Activated CD4-positive, alpha-beta T cell treated with anti-CD3 and anti-CD28 coated beads for 36 hours (primary cell): ENCODE measurements at regions of chr9 and their contacts with region 1.

Region 1: GRCh38 chr9:132944302-132945185 is at the start of gene TSC1:
- DNase-seq: peak; percentile 99
- ATAC-seq: peak; percentile 91
- H3K4me3 Mint-ChIP-seq: peak within 1 kb of the TSS; percentile 81
- H3K27ac Mint-ChIP-seq: peak within 1 kb of the TSS; percentile 99
- H3K4me1 Mint-ChIP-seq: peaks cover 31% of the 10 kb centered on the region
- H3K27me3 Mint-ChIP-seq: no peaks in the 10 kb centered on the region
- total RNA-seq, gene TSC1: 23.9 to 28.6 TPM

Region 2: DNA sequence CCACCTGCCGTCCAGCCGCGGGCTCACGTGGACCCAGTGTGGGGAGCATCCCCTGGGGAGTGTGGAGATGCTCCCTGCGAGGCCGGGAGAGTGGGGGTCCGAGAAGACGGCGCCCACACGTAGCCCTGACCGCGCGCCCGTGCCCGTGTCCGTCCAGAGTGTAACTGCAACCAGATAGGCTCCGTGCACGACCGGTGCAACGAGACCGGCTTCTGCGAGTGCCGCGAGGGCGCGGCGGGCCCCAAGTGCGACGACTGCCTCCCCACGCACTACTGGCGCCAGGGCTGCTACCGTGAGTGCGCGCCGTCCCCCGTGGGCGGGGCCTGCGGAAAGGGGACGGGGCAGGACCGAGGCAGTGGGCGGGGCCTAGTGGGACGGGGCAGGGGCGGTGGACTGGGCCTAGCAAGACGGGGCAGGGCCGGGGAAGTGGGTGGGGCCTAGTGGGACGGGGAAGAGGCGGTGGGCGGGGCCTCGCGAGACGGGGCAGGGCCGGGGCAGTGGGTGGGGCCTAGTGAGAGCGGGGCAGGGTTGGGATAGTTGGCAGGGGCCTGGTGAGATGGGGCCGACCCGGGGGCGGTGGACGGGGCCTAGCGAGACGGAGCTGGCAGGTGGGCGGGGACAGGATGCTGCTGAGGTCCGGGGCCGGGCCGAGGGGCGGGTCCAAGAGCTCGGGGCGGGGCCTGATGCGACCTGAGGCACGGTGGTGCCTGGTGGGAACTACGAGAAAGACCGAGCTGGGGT is 703.6 kb before region 1 on chr9:
- CTCF ChIA-PET with region 1: no interaction called
- POLR2A ChIA-PET with region 1: no interaction called
- intact Hi-C with region 1: loop called in 1 of 2 experiments (anchors 1 kb)
- DNase-seq: peak; percentile 100
- ATAC-seq: peak; percentile 95
- H3K4me3 Mint-ChIP-seq: peak overlapping the region; percentile 87
- H3K27ac Mint-ChIP-seq: peak overlapping the region; percentile 91
- H3K4me1 Mint-ChIP-seq: peaks cover 10% of the 10 kb centered on the region
- H3K27me3 Mint-ChIP-seq: peaks cover 2% of the 10 kb centered on the region

Region 3: GRCh38 chr9:132768932-132769905 is 175.3 kb before region 1 on chr9:
- CTCF ChIA-PET with region 1: no interaction called
- POLR2A ChIA-PET with region 1: no interaction called
- intact Hi-C with region 1: loop called in 1 of 2 experiments (anchors 1 kb)
- DNase-seq: peak; percentile 82
- ATAC-seq: peak; percentile 75
- H3K4me3 Mint-ChIP-seq: peak overlapping the region; percentile 85
- H3K27ac Mint-ChIP-seq: peak overlapping the region; percentile 94
- H3K4me1 Mint-ChIP-seq: peaks cover 16% of the 10 kb centered on the region
- H3K27me3 Mint-ChIP-seq: no peaks in the 10 kb centered on the region

Region 4: DNA sequence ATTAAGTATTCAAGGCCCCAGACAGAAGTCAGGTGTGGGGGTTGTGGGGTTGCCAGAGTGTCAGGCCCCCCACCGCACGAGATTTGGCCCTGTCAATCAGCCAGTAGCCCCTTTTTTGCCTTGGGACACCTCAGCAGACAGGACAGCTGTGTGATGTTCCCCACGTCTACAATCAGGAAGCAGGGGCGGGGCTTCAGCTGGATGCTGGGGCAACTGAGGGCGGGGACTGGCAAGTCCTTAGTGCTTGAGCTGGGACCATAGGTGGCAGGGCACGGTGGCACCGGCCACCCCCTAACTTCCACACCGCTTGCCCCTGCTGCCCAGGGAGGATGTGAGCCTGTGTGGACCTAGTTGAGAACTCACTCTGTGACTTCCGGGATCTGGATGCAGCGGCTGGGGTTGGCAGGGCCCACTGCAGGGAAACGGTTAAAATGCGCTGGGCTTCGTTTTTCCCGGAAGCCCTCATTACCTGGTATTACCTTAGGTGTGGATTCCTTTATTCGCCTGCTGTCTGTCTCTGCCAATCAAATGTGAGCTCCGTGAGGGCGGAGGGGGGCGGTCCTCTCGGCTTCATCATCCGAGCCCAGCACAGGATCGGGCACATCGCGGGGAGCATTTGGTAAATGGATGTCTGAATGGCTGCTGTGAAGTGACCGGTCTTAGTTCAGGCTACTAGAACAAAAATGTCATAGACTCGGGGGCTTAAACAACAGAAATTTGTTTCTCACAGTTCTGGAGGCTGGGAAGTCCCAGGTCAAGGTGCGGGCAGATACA is 78.8 kb after region 1 on chr9:
- CTCF ChIA-PET with region 1: interaction called, 4 read pairs
- POLR2A ChIA-PET with region 1: no interaction called
- intact Hi-C with region 1: loop called in 1 of 2 experiments (anchors 2 kb)
- DNase-seq: peak; percentile 87
- ATAC-seq: peak; percentile 70
- H3K4me3 Mint-ChIP-seq: peak overlapping the region; percentile 49
- H3K27ac Mint-ChIP-seq: peak overlapping the region; percentile 74
- H3K4me1 Mint-ChIP-seq: peaks cover 18% of the 10 kb centered on the region
- H3K27me3 Mint-ChIP-seq: no peaks in the 10 kb centered on the region

Region 5: DNA sequence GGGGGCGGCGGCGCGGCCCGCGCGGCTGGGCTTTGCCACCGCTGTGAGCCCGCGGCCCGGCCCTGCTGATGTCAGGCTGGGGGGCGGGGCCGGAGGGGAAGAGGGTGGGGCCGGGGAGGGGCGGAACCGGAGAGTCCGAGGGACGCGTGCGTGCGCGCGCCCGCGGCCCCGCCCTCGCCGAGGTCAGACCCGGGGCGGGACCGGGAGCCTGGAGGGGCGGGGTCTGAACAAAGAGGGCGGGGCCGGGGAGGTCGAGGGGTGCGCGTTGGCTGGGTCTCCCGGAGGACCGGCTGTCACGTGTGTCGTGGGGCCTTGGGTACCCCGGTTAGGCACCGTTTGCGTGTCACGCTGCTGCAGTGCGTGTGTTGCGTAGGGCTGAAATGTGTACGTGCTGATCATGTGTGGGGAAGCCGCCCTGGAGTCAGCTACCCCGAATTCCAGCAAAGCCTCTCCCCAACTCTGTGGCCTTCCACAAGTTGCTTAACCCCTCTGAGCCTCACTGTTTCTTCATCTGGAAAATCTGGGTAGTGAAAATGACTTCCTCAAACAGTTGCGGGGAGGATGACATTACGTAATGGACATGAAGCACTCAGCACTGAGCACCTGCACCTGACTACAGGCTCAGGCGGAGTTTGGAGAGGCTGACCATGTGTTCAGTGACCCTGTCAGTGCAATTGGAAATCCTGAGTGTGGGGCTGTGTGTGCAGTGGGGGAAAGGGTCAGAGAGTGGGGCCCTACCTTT is 176.8 kb after region 1 on chr9 and contains the start of gene RALGDS:
- CTCF ChIA-PET with region 1: no interaction called
- POLR2A ChIA-PET with region 1: no interaction called
- intact Hi-C with region 1: loop called in 1 of 2 experiments (anchors 2 kb)
- DNase-seq: peak; percentile 96
- ATAC-seq: peak; percentile 82
- H3K4me3 Mint-ChIP-seq: peak within 1 kb of the TSS; percentile 71
- H3K27ac Mint-ChIP-seq: peak within 1 kb of the TSS; percentile 80
- H3K4me1 Mint-ChIP-seq: peaks cover 58% of the 10 kb centered on the region
- H3K27me3 Mint-ChIP-seq: no peaks in the 10 kb centered on the region
- total RNA-seq, gene RALGDS: 65.1 to 78.6 TPM

Region 6: DNA sequence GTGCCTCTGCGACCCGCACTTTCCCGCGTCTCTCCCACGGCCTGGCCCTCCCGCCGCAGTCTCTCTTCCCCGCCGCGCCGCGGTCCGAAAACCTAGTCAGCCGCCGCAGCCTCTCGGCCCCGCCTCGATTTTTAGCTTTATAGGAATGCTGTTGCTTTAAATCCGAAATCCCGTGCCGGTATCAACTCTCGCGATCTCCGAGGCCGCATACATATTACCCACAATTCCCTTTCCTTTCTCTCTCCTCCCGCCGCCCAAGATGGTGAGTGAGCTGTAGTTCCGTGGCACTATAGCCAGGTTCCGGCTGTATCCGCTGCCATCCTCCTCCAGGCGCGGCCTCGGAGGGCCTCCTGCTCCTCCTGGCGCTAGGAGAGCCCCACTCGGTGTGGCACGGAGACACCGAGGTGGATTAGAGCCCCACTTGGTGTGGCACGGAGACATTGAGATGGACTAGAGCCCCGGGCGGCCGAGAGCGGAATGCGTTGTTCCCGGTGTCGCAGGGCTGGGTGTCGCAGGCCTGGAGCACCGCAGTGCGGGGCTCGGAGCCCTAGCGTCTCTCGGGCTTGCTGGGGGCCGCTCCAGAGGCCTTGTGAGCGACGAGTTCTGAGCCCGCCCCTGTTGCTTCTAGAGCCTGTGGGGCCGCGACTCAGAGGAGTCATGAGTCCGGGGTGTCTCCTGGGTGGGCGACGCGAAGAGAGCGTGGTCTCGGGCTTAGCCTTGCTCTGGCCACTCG is 403.6 kb after region 1 on chr9 and contains the starts of genes MED22 and RPL7A:
- CTCF ChIA-PET with region 1: no interaction called
- POLR2A ChIA-PET with region 1: no interaction called
- intact Hi-C with region 1: loop called in 1 of 2 experiments (anchors 1 kb)
- DNase-seq: peak; percentile 96
- ATAC-seq: peak; percentile 83
- H3K4me3 Mint-ChIP-seq: peak within 1 kb of the TSS; percentile 97
- H3K27ac Mint-ChIP-seq: peak within 1 kb of the TSS; percentile 97
- H3K4me1 Mint-ChIP-seq: peaks cover 36% of the 10 kb centered on the region
- H3K27me3 Mint-ChIP-seq: no peaks in the 10 kb centered on the region
- total RNA-seq, gene MED22: 22.9 to 26.4 TPM
- total RNA-seq, gene RPL7A: 3,179 to 3,246 TPM

Region 7: GRCh38 chr9:133534346-133535291 is 590.1 kb after region 1 on chr9 and contains the start of gene ADAMTSL2:
- CTCF ChIA-PET with region 1: no interaction called
- POLR2A ChIA-PET with region 1: no interaction called
- intact Hi-C with region 1: no loop called
- DNase-seq: peak; percentile 65
- ATAC-seq: peak; percentile 54
- H3K4me3 Mint-ChIP-seq: peak within 1 kb of the TSS; percentile 35
- H3K27ac Mint-ChIP-seq: no peak within 1 kb of the TSS
- H3K4me1 Mint-ChIP-seq: peaks cover 18% of the 10 kb centered on the region
- H3K27me3 Mint-ChIP-seq: peaks cover 6% of the 10 kb centered on the region
- total RNA-seq, gene ADAMTSL2: 0.11 to 0.32 TPM